Activated CD4-positive, alpha-beta memory T cell treated with anti-CD3 and anti-CD28 coated beads for 36 hours (primary cell): ENCODE measurements at regions of chr11 and their contacts with region 1.

Region 1: GRCh38 chr11:61392981-61393595 is 701 bp downstream of the TMEM216 start:
- DNase-seq: peak; percentile 25
- H3K4me3 Mint-ChIP-seq: peak overlapping the region; percentile 87
- H3K27ac Mint-ChIP-seq: peak overlapping the region; percentile 89
- H3K4me1 Mint-ChIP-seq: peaks cover 18% of the 10 kb centered on the region
- H3K27me3 Mint-ChIP-seq: no peaks in the 10 kb centered on the region

Region 2: GRCh38 chr11:60978546-60979380 is 414.3 kb before region 1 on chr11:
- CTCF ChIA-PET with region 1: no interaction called
- POLR2A ChIA-PET with region 1: no interaction called
- intact Hi-C with region 1: no loop called
- DNase-seq: peak; percentile 92
- H3K4me3 Mint-ChIP-seq: peak overlapping the region; percentile 95
- H3K27ac Mint-ChIP-seq: peak overlapping the region; percentile 99
- H3K4me1 Mint-ChIP-seq: peaks cover 71% of the 10 kb centered on the region
- H3K27me3 Mint-ChIP-seq: no peaks in the 10 kb centered on the region

Region 3: GRCh38 chr11:61361686-61362541 is 31.2 kb before region 1 on chr11 and contains the starts of genes CYB561A3 and TMEM138:
- CTCF ChIA-PET with region 1: interaction called, 8 read pairs
- POLR2A ChIA-PET with region 1: interaction called, 9 read pairs
- intact Hi-C with region 1: loop called (anchors 1 kb)
- DNase-seq: peak; percentile 95
- H3K4me3 Mint-ChIP-seq: peak within 1 kb of the TSS; percentile 100
- H3K27ac Mint-ChIP-seq: peak within 1 kb of the TSS; percentile 96
- H3K4me1 Mint-ChIP-seq: peaks cover 32% of the 10 kb centered on the region
- H3K27me3 Mint-ChIP-seq: no peaks in the 10 kb centered on the region
- total RNA-seq, gene CYB561A3: 32.3 to 32.9 TPM
- total RNA-seq, gene TMEM138: 33.7 to 34.6 TPM

Region 4: DNA sequence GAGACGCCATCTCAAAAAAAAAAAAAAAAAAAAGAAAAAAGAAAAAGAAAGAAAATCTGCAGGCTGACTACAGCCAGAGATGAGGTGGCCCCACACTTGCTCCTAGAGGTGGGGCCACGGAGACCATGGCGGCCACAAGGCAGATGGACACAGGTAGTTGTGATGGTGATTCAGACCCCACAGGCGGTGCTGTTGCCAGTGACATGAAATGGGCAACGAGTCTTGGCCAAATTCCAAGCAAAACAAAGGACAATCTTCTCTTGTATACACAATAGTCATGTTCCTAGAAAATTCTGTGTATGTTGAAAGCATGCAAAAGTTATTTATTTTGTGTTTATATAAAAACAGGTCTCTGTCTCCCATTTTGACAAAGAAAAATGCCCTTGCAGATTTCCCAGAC is 264.5 kb after region 1 on chr11:
- CTCF ChIA-PET with region 1: no interaction called
- POLR2A ChIA-PET with region 1: no interaction called
- intact Hi-C with region 1: no loop called
- DNase-seq: no peak
- H3K4me3 Mint-ChIP-seq: no peak overlapping the region
- H3K27ac Mint-ChIP-seq: no peak overlapping the region
- H3K4me1 Mint-ChIP-seq: no peaks in the 10 kb centered on the region
- H3K27me3 Mint-ChIP-seq: peaks cover 10% of the 10 kb centered on the region